Motor neuron (in vitro differentiated cells): ENCODE measurements at regions of chr19 and their contacts with region 1.

Region 1: DNA sequence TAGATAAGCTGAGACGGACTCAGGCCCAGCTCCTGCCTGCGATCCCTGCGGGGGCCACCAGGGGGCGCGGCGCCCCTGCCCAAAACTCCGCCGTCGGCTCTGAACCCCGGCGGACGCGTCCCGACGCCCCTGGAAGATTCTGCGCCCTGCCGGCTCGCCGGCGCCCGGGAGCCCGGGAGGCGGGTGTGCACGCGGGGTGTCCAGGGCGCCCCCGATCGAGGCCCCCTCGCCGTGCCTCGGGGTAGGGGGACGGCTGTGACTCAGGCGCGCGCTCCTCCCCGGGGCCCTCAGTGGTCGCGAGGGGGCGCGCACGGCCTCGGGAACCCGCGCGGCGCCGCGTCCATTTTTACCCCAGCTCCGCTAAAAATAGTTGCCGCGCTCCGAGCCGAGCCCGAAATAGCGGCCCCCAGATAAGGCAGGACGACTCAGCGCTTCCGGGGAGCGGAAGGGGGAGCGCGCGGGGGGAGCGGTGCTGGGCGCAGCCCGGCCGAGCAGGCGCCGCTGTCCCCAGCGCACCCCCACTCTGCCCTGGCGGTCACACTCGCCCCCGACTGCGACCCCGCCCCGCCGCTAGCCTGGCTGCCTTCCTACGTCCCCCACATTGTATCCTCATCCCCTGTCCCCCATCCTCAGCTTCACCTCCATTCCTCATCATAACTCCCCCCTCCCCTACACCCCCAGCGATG is 16.0 kb upstream of the ERCC1 start:
- ATAC-seq: peak; percentile 44 to 72 (median 68)
- H3K4me3 ChIP-seq: peak overlapping the region; percentile 42 to 97 (median 51)
- H3K27ac ChIP-seq: peak overlapping the region; percentile 62 to 69
- H3K4me1 ChIP-seq: peaks cover 13 to 14% of the 10 kb centered on the region in 2 donors

Region 2: GRCh38 chr19:45346449-45346848 is 93.3 kb before region 1 on chr19:
- in situ Hi-C with region 1: no loop called
- ATAC-seq: peak in 2 of 8 experiments; percentile 15 to 58
- H3K4me3 ChIP-seq: no peak overlapping the region
- H3K27ac ChIP-seq: no peak overlapping the region
- H3K4me1 ChIP-seq: no peaks in the 10 kb centered on the region

Region 3: DNA sequence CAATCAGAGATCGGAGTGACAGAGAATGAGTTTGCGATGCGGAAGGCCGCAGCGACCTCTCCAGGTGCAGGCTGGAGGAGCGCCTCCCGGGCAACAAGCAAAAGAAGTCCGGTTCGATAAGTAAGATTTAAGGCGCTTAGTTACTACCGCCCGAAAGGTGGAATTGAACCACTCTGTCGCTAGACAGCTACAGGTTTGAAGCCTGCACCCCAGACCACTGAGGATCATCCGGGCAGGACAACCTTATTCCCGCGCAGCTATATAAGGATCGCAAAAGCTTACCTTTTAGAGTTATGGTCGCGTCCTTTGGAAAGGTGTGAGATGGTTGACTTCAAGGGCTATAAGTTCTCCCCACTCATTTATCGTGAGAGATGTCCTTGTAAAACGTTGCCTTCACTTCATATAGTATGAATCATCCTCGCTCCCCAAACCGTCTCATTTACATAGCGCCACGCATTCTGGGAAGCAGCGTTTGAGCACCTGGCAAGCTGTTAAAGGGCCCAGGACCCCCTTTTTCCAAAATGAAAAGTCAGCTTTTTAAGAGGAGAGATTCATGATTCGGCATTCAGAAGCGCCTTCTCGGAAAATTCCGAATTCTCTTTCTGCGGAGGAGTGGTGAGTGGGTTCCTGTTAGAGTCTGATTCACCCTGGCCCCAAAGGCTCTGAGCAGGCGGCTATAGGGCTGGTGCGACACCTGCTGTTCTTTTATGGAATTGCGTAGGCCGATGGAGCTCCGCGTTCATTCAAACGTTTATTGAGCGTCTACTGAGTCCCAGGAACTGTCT is 38.9 kb after region 1 on chr19:
- in situ Hi-C with region 1: loop called in 4 of 9 experiments (anchors 5 to 10 kb)
- ATAC-seq: peak; percentile 45 to 97 (median 95)
- H3K4me3 ChIP-seq: peak overlapping the region; percentile 50 to 71 (median 59)
- H3K27ac ChIP-seq: peak overlapping the region; percentile 93 to 99
- H3K4me1 ChIP-seq: peaks cover 0 to 3% of the 10 kb centered on the region in 2 donors

Region 4: DNA sequence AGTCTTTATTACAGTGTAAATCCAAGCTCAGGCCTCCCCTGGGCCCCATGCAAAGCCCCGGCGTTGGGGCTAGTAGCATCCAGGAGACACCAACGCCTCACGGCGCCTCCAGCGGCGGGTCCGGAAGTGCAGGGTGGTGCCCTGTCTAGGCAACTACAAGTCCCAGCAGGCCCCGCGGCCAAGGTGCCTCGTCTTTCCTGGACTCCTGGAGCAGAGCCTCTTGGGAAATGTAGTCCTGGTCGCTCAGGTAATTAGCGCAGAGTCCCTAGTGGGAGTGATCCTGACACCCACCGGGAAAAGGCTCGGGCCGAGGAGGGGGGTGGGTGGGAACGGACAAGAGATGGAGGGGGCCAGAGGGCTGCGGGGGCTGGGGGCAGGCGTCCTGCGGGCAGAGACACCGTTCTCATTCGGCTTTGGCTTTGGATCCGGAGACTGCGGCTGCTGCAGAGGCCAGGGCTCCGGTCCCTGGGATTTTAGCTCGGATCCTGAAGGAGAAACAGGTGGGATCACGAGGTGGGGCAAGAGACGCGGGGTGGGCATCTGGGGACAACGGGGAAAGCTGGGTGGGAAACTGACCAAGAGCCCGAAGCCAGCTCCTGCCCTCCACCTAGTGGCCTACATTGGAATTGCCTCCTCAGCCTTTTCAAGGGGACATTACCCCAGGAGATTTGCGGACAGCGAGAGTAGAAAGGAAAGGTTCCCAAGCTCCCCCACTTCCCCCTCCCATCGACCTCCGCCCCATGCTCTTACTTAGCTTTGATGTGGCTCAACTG is 45.8 kb after region 1 on chr19:
- in situ Hi-C with region 1: loop called in 2 of 9 experiments (anchors 10 kb)
- ATAC-seq: peak; percentile 93 to 98 (median 96)
- H3K4me3 ChIP-seq: peak overlapping the region; percentile 22 to 51 (median 43)
- H3K27ac ChIP-seq: no peak overlapping the region
- H3K4me1 ChIP-seq: no peaks in the 10 kb centered on the region

Region 5: GRCh38 chr19:45615795-45616708 is 176.3 kb after region 1 on chr19:
- in situ Hi-C with region 1: no loop called
- ATAC-seq: peak; percentile 36 to 92 (median 90)
- H3K4me3 ChIP-seq: peak overlapping the region; percentile 20 to 34 (median 25)
- H3K27ac ChIP-seq: peak overlapping the region; percentile 87 to 95
- H3K4me1 ChIP-seq: peaks cover 7 to 9% of the 10 kb centered on the region in 2 donors